Mammary epithelial cell (primary cell): ENCODE measurements at regions of chr11 and their contacts with region 1.

Region 1: DNA sequence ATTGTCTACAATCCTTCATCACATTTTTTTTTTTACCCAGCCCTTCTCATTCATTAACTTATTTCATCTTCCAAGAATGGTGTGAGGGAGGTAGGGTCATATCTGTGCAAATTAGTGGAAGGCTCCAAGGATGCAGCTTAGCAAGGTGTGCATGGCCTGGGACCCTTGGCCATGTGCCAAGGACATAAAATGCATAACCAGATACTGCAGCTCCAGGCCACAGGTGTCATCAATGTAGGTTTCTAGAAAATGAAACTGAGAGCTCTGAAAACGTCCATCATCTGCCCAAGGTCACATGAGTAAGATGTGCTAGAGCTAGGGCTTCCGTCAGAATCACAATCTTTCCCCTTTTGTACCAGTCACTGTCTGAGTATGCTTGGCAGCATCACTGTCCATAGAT is 29.8 kb downstream of the ANKK1 start:
- DNase-seq: no peak
- H3K4me3 ChIP-seq: no peak overlapping the region
- H3K27ac ChIP-seq: no peak overlapping the region
- H3K4me1 ChIP-seq: no peaks in the 10 kb centered on the region
- H3K27me3 ChIP-seq: no peaks in the 10 kb centered on the region
- CTCF ChIP-seq: no peak

Region 2: GRCh38 chr11:113372309-113372708 is 45.1 kb before region 1 on chr11:
- CTCF ChIA-PET with region 1: no interaction called
- dilution Hi-C with region 1: no loop called
- in situ Hi-C with region 1: no loop called
- intact Hi-C with region 1: no loop called
- DNase-seq: no peak
- H3K4me3 ChIP-seq: no peak overlapping the region
- H3K27ac ChIP-seq: no peak overlapping the region
- H3K4me1 ChIP-seq: peaks cover 46% of the 10 kb centered on the region
- H3K27me3 ChIP-seq: no peaks in the 10 kb centered on the region
- CTCF ChIP-seq: no peak

Region 3: DNA sequence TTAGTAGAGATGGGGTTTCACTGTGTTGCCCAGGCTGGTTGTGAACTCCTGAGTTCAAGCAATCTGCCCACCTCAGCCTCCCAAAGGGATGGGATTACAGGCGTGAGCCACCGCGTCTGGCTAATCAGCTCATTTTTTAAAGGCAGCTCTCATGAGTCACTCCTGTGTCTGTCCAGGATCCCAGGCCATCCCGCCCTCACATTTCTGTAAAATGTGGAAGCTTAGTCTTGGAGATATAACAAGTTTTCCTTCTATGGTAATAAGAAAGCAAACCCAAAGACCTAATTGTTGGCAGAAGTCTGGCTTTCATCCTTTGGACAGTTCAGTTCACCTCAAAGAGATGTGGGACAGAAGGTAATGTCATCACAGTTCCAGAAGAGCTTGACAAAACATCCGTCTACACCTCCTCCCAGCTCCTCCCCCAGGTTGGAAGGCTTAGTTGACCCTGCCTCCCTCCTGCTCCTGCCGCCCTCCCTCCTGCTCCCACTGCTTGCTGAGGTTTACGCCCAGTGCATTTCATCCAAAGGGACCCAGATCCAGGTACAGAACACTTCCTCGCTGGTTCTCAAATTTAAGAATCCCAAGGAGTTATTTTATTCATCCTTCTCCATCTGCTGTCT is 51.4 kb after region 1 on chr11:
- CTCF ChIA-PET with region 1: no interaction called
- dilution Hi-C with region 1: loop called (anchors 5 kb)
- in situ Hi-C with region 1: no loop called
- intact Hi-C with region 1: no loop called
- DNase-seq: no peak
- H3K4me3 ChIP-seq: no peak overlapping the region
- H3K27ac ChIP-seq: no peak overlapping the region
- H3K4me1 ChIP-seq: peaks cover 23% of the 10 kb centered on the region
- H3K27me3 ChIP-seq: no peaks in the 10 kb centered on the region
- CTCF ChIP-seq: no peak